AG04449 (cell line): ENCODE measurements at regions of chr4 and their contacts with region 1.

Region 1: GRCh38 chr4:140359562-140360427 is 13.7 kb upstream of the SCOC start:
- DNase-seq: no peak
- H3K4me3 ChIP-seq: no peak overlapping the region
- CTCF ChIP-seq: peak; percentile 73

Region 2: GRCh38 chr4:140012688-140013486 is 346.9 kb before region 1 on chr4:
- CTCF ChIA-PET with region 1: interaction called, 14 read pairs
- POLR2A ChIA-PET with region 1: no interaction called
- DNase-seq: no peak
- H3K4me3 ChIP-seq: no peak overlapping the region
- CTCF ChIP-seq: peak; percentile 55

Region 3: GRCh38 chr4:140028676-140029517 is 330.9 kb before region 1 on chr4:
- CTCF ChIA-PET with region 1: no interaction called
- POLR2A ChIA-PET with region 1: no interaction called
- DNase-seq: no peak
- H3K4me3 ChIP-seq: no peak overlapping the region
- CTCF ChIP-seq: no peak

Region 4: DNA sequence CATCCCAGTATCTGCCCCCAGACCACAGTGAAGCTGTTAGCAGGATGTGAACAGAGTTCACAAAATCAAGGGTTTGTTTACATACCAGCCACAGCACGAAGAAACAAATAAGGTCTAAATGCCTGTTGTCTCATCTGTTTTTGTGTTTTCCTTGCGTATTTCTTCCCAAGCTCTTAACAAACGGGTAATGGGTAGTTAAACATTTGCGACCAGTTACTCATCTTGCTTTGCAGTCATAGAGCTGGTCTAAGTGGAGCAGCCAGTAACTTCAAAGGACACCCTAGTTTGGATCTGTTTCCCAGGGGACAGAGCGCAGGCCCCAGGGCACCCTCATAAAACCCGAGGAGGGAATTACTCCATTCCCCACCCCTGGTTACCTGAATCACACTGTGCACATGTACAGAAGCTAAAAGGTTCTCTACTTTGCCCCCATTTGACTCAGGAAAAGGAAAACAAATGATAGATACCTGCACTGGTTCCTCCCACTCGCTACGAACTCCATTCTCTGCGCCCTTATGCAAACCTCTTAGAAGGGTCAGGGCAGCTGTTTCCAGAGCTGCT is 274.7 kb before region 1 on chr4:
- CTCF ChIA-PET with region 1: no interaction called
- POLR2A ChIA-PET with region 1: no interaction called
- DNase-seq: no peak
- H3K4me3 ChIP-seq: no peak overlapping the region
- CTCF ChIP-seq: no peak

Region 5: DNA sequence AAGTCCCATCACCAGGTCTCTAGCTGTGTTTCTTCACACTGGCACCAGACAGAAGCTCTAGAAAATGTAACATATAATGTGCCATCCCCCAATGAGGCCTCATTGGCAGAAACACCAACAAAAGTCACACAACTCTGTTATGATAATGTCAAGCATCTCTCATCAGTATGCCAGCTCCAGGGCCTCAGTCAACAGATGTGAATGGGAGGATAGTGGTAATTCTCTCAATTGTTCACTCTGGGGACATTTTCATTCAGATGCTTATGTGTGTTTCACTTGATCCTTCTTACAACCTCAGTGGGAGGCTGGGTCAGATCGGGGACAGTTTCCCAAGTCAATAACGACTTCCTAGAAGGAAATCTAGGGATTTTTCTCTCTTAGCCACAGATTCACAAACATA is 43.8 kb before region 1 on chr4:
- CTCF ChIA-PET with region 1: no interaction called
- POLR2A ChIA-PET with region 1: no interaction called
- DNase-seq: no peak
- H3K4me3 ChIP-seq: no peak overlapping the region
- CTCF ChIP-seq: no peak

Region 6: DNA sequence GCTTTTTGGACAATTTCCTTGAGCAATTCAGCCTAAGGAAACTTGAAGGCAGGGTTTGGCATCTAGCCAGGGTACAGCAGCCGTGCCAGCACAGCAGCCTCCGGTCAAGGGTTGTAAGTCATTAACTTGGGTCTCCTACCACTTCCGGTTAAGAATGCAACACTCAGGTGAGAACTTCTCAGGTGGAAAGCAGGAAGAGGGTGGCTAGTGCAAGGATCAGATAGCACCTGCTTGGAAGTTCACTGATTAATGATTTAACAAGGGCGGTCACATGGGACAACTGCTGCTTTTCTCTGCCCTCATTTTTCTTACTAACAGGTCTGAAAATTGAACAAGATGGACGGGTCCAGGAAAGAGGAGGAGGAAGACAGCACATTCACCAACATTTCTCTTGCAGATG is 16.5 kb before region 1 on chr4:
- CTCF ChIA-PET with region 1: interaction called, 68 read pairs
- POLR2A ChIA-PET with region 1: no interaction called
- DNase-seq: no peak
- H3K4me3 ChIP-seq: no peak overlapping the region
- CTCF ChIP-seq: no peak

Region 7: DNA sequence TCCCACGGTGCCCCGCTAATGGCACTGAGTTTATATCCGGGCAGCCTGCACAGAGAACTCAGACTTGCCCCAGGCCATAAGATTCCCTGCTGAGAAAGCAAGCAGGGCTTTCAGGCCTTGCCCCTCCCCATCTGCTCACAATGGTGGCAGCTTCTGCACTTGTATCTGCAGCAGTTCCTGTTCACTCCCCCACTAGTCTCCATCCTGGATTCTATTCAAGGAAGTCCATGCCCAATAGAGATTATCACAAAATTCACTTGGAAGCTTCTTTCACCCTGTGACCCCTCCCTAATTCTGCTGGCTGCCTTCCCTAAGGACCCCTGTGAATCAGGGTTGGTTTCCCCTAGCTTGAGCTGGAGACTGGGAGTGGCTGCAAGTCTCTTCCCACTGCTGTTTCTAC is 243.5 kb after region 1 on chr4:
- CTCF ChIA-PET with region 1: interaction called, 103 read pairs
- POLR2A ChIA-PET with region 1: no interaction called
- DNase-seq: no peak
- H3K4me3 ChIP-seq: no peak overlapping the region
- CTCF ChIP-seq: no peak

Region 8: DNA sequence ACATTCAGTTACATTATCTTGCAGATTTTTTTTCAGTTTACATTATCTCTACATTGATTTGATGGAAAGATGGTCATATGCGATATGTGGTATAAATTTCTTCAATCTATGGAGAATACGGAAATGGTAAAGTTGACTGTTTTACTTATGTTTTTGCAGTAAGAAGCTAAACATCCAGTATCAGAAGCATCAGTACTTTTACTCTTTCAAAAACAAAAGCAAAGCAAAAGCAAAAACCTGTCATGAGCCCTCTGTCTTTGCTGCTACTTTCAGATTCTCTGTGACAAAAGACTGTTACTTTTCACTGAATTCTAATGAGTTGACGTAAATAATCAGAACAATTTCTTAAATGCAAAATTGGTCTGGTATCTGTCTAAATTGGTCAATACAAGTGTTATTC is 261.4 kb after region 1 on chr4:
- CTCF ChIA-PET with region 1: interaction called, 11 read pairs
- POLR2A ChIA-PET with region 1: no interaction called
- DNase-seq: no peak
- H3K4me3 ChIP-seq: no peak overlapping the region
- CTCF ChIP-seq: no peak